Ovary (tissue), 10 donors: ENCODE measurements at regions of chr2 and their contacts with region 1.

Region 1: DNA sequence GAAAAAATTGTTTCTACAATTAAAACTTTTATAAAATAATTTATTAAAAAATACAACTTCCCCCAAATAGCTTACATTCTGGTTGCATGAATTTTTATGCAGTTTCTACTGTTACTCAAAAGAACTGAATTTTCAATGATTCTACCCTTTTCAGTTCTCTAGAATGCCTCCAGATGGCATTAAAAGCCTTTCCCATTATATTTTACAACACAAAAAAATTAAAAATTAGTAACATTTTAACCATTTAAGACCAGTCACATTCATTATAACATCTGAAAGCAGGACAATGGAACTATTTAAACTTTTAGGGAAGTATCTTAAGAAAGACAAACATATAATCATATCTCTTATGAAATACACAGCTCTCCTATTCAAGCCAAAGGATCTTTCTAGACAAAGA is 236.0 kb upstream of the REV1 start:
- DNase-seq: no peak
- H3K4me3 ChIP-seq: no peak overlapping the region
- H3K27ac ChIP-seq: no peak overlapping the region
- H3K4me1 ChIP-seq: no peaks in the 10 kb centered on the region
- H3K27me3 ChIP-seq: no peaks in the 10 kb centered on the region
- CTCF ChIP-seq: no peak
- EP300 ChIP-seq: no peak
- POLR2A ChIP-seq: no peak

Region 2: GRCh38 chr2:100208141-100208770 is 482.4 kb after region 1 on chr2:
- intact Hi-C with region 1: loop called in 1 of 4 experiments (anchors 10 kb)
- DNase-seq: peak in 1 of 5 donors; percentile 37
- H3K4me3 ChIP-seq: no peak overlapping the region
- H3K27ac ChIP-seq: no peak overlapping the region
- H3K4me1 ChIP-seq: peaks cover 2% of the 10 kb centered on the region
- H3K27me3 ChIP-seq: no peaks in the 10 kb centered on the region
- CTCF ChIP-seq: peak in 1 of 3 donors; percentile 38
- EP300 ChIP-seq: no peak
- POLR2A ChIP-seq: no peak

Region 3: DNA sequence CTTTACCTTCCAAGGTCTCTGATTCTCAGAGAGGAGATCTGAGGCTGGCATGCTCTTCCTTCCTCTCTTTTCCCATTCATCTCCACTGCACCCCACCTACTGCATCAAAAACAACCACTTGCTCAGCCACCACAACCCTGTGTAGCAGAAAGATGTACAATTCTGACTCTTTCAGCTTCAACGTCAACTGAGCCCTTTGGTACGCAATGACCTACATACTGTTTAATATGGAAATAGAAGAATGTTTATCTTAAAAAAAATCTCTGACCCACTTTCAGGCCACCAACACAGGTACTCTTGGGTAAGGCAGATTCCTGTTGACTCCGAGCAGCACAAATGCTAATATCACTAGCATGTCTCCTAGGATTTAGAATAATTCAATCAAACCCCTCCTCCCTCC is 492.7 kb after region 1 on chr2:
- intact Hi-C with region 1: loop called in 1 of 4 experiments (anchors 5 kb)
- DNase-seq: no peak
- H3K4me3 ChIP-seq: no peak overlapping the region
- H3K27ac ChIP-seq: no peak overlapping the region
- H3K4me1 ChIP-seq: peaks cover 4% of the 10 kb centered on the region
- H3K27me3 ChIP-seq: no peaks in the 10 kb centered on the region
- CTCF ChIP-seq: no peak
- EP300 ChIP-seq: no peak
- POLR2A ChIP-seq: no peak